Mucosa of descending colon (tissue), 3 donors: ENCODE measurements at regions of chr10 and their contacts with region 1.

Region 1: DNA sequence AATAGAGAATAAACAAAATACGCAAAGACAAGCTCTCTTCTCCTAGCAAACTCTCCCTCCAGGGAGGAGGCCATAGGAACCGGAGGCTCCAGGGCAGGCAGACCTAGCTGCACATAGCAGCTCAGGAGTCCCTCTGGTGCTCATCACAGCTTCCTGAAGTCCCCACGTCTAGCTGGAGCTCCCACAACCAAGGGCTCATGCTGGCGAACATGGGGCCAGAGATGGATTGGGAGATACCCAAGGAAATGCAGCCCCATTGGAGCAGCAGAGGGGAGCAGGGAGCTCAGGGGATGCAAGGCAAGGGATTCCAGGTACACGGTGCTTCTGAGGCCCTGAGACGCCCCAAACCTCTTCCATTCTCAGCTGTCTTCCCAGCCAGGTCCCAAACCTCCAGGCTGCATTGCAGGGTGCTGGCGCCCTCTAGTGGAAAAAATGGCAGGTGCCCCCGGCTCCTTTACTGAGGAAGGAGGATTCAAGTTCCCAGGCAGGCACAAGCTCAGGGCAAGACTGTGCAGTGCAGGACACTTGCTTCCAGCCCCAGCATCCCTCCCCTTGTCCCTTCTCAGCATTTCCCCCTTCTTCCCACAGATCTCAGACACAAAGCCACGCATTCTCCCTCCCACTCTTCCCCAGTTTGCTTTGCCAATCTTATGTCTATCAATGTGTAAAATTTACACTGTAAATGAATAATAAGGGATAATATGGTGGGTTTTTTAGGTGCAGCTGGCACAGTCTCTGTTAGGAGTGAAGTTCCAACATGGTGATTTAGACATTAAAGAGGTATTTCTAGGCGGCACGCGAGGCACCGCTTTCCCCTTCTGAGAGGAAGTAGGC is 46.2 kb downstream of the GPAM start:
- DNase-seq: peak; percentile 60 to 86 (median 80)
- ATAC-seq: peak; percentile 78
- H3K4me3 ChIP-seq: no peak overlapping the region
- H3K4me1 ChIP-seq: no peaks in the 10 kb centered on the region
- CTCF ChIP-seq: peak; percentile 90

Region 2: DNA sequence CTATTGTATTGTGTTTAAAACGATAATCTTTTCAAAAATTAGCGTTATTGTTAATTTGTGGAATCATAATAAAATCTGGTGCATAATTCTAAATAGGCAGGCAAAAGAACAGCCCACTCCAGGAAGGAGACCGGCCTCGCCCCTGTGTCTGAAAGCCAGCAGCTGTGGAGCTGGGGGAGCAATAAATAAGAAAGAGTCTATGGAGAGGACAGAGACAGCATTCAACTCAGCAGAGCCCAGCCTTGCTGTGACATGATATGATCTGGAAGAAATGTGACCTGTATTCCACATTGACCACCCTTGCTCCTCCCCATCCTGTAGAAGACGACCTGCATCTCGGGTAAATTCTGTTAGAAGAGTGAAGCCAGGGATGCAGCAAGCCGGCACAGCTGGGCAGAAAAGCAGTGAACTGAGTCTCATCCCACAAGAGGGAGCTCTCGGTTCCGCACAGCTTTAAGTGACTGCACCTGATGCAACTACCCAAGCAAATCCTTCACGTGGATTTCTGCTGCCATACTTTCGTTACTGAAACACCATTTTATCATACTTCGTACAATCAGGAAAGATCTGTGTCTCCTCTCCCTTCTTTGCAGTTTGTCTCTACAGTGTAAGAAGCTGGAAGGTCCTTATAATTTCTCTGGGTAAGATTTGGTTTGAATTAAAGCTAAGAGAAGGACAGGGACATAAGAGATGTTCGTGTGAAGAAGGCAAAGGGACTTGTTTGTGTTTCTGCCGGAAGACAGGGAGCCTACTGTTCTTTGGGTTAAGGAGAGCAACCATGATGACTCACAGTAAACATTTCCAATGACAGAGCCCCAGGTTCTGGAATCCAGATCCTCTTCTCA is 380.9 kb before region 1 on chr10:
- intact Hi-C with region 1: loop called in 1 of 2 experiments (anchors 10 kb)
- DNase-seq: peak in 1 of 3 donors; percentile 32
- ATAC-seq: peak; percentile 49
- H3K4me3 ChIP-seq: no peak overlapping the region
- H3K4me1 ChIP-seq: no peaks in the 10 kb centered on the region
- CTCF ChIP-seq: no peak

Region 3: GRCh38 chr10:111840546-111840945 is 296.8 kb before region 1 on chr10:
- intact Hi-C with region 1: no loop called
- DNase-seq: no peak
- ATAC-seq: no peak
- H3K4me3 ChIP-seq: no peak overlapping the region
- H3K4me1 ChIP-seq: no peaks in the 10 kb centered on the region
- CTCF ChIP-seq: no peak